ENCODE measurements at regions of chr2 and their contacts with region 1.

Region 1: DNA sequence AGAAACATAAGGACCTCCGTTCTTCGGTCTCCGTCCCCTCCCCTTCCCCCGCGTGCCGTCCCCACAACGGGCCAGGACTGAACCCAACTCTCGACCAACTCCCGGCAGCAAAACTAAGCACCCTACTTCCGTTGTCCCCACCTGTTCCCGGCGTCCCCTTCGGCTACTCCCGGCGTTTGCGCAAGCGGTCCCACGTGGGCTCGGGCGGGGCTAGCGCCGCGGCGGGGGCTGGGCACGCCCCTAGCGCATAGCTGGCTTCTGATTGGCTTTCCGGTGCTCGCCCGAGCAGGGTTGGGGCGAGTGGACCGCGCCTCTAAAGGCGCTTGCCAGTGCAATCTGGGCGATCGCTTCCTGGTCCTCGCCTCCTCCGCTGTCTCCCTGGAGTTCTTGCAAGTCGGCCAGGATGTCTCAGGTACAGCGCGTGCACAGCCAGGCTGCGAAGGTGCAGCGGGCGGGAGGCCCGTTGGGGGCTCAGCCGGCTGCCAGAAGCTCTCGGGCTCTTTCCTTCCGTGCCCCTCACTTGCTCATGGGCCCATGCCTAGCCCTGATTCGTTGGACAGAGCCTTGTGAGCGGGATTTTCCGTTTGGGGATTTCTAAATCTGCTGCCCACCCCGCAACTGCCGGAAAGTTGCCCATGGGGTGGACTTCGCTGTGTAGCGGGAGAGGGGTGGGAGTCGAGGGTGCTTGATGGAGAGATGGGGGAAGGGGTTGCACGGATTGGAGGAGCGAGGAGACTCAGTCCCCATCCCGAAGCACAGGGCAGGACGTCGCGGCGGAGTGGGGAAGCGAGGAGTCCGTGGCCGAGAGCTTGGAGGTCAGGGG is at the starts of genes C2orf76 and DBI:
- DNase-seq: peak; percentile 82 to 94 (median 89)
- ATAC-seq: peak; percentile 97
- H3K4me3 ChIP-seq: peak within 1 kb of the TSS; percentile 80
- H3K4me3 Mint-ChIP-seq: peak within 1 kb of the TSS; percentile 79 to 99 (median 94)
- H3K27ac ChIP-seq: peak within 1 kb of the TSS; percentile 86
- H3K27ac Mint-ChIP-seq: peak within 1 kb of the TSS; percentile 78 to 97 (median 92)
- H3K4me1 ChIP-seq: peaks cover 10 to 19% of the 10 kb centered on the region in 2 donors
- H3K4me1 Mint-ChIP-seq: peaks cover 37 to 64% (median 47%) of the 10 kb centered on the region in 7 donors
- H3K27me3 ChIP-seq: no peaks in the 10 kb centered on the region
- H3K27me3 Mint-ChIP-seq: no peaks in the 10 kb centered on the region
- total RNA-seq, gene C2orf76: 5.1 to 9.2 (median 8.5) TPM
- total RNA-seq, gene DBI: 29.3 to 111 (median 42.7) TPM

Region 2: DNA sequence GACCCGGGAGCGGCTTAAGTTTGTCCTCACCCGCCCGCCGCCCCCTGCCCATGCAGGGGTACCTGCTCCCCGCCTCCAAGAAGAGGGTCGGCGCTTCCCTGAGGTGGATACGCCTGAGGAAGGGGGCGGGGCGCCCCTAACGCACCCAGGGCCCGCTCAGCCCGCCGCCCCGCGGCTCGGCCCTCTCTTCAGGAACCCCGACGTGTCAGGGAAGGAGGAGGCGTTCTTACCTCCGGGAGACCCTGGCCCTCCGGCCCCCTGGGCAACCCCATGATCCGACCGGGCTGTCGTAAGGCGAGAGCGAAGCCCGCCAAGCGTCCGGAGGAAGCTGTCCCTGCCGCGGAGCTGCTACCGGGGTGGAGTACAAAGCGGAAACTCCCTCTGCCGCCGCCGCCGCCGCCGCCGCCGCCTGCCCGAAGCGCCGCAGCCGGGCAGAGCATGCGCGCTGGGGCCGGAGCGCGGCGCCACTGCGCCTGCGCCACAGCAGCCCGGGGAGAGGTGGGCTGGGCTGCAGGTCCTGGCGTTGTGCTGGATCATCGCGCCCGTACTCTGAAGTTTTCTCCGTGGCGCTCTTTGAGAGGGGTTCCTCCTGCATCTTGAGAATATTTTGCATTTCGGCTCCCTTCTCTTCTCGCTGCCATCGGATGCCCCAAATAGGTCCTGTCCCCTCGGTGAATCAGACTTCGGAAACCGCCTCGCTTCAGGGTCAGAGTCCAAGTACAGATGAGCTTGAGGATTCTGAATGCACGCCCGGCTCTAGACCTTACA is 1353.0 kb before region 1 on chr2 and contains the start of gene CCDC93:
- CTCF ChIA-PET with region 1: no interaction called
- POLR2A ChIA-PET with region 1: no interaction called
- intact Hi-C with region 1: loop called (anchors 1 to 5 kb)
- DNase-seq: peak; percentile 82 to 95 (median 91)
- ATAC-seq: peak; percentile 88
- H3K4me3 ChIP-seq: peak within 1 kb of the TSS; percentile 90
- H3K4me3 Mint-ChIP-seq: peak within 1 kb of the TSS; percentile 87 to 98 (median 95)
- H3K27ac ChIP-seq: peak within 1 kb of the TSS; percentile 98
- H3K27ac Mint-ChIP-seq: peak within 1 kb of the TSS; percentile 59 to 96 (median 90)
- H3K4me1 ChIP-seq: peaks cover 6 to 9% of the 10 kb centered on the region in 2 donors
- H3K4me1 Mint-ChIP-seq: peaks cover 30 to 69% (median 41%) of the 10 kb centered on the region in 7 donors
- H3K27me3 ChIP-seq: no peaks in the 10 kb centered on the region
- H3K27me3 Mint-ChIP-seq: peaks cover 0 to 6% (median 1%) of the 10 kb centered on the region in 5 donors
- total RNA-seq, gene CCDC93: 34.8 to 73.9 (median 51.5) TPM

Region 3: GRCh38 chr2:118186110-118186857 is 1180.6 kb before region 1 on chr2:
- CTCF ChIA-PET with region 1: no interaction called
- POLR2A ChIA-PET with region 1: interaction called, 4 read pairs
- intact Hi-C with region 1: loop called (anchors 1 to 2 kb)
- DNase-seq: peak; percentile 77 to 91 (median 86)
- ATAC-seq: peak; percentile 97
- H3K4me3 ChIP-seq: peak overlapping the region; percentile 81
- H3K4me3 Mint-ChIP-seq: peak overlapping the region; percentile 89 to 98 (median 94)
- H3K27ac ChIP-seq: peak overlapping the region; percentile 74
- H3K27ac Mint-ChIP-seq: peak overlapping the region; percentile 88 to 98 (median 90)
- H3K4me1 ChIP-seq: peaks cover 6 to 9% of the 10 kb centered on the region in 2 donors
- H3K4me1 Mint-ChIP-seq: peaks cover 7 to 25% (median 21%) of the 10 kb centered on the region in 7 donors
- H3K27me3 ChIP-seq: no peaks in the 10 kb centered on the region
- H3K27me3 Mint-ChIP-seq: peaks cover 0 to 2% (median 0%) of the 10 kb centered on the region in 5 donors

Region 4: GRCh38 chr2:118309946-118310680 is 1056.7 kb before region 1 on chr2:
- CTCF ChIA-PET with region 1: no interaction called
- POLR2A ChIA-PET with region 1: no interaction called
- intact Hi-C with region 1: loop called in 1 of 2 experiments (anchors 1 kb)
- DNase-seq: peak; percentile 51 to 82 (median 75)
- ATAC-seq: peak; percentile 81
- H3K4me3 ChIP-seq: peak overlapping the region; percentile 89
- H3K4me3 Mint-ChIP-seq: peak overlapping the region; percentile 81 to 95 (median 90)
- H3K27ac ChIP-seq: peak overlapping the region; percentile 89
- H3K27ac Mint-ChIP-seq: peak overlapping the region; percentile 87 to 99 (median 96)
- H3K4me1 ChIP-seq: peaks cover 10 to 12% of the 10 kb centered on the region in 2 donors
- H3K4me1 Mint-ChIP-seq: peaks cover 0 to 21% (median 9%) of the 10 kb centered on the region in 7 donors
- H3K27me3 ChIP-seq: no peaks in the 10 kb centered on the region
- H3K27me3 Mint-ChIP-seq: peaks cover 0 to 21% (median 0%) of the 10 kb centered on the region in 5 donors

Region 5: GRCh38 chr2:118968042-118968441 is 398.8 kb before region 1 on chr2:
- CTCF ChIA-PET with region 1: no interaction called
- POLR2A ChIA-PET with region 1: no interaction called
- intact Hi-C with region 1: no loop called
- DNase-seq: no peak
- ATAC-seq: no peak
- H3K4me3 ChIP-seq: no peak overlapping the region
- H3K4me3 Mint-ChIP-seq: no peak overlapping the region
- H3K27ac ChIP-seq: no peak overlapping the region
- H3K27ac Mint-ChIP-seq: no peak overlapping the region
- H3K4me1 ChIP-seq: no peaks in the 10 kb centered on the region
- H3K4me1 Mint-ChIP-seq: peaks cover 0 to 8% (median 0%) of the 10 kb centered on the region in 7 donors
- H3K27me3 ChIP-seq: no peaks in the 10 kb centered on the region
- H3K27me3 Mint-ChIP-seq: peaks cover 0 to 13% (median 7%) of the 10 kb centered on the region in 5 donors

Region 6: DNA sequence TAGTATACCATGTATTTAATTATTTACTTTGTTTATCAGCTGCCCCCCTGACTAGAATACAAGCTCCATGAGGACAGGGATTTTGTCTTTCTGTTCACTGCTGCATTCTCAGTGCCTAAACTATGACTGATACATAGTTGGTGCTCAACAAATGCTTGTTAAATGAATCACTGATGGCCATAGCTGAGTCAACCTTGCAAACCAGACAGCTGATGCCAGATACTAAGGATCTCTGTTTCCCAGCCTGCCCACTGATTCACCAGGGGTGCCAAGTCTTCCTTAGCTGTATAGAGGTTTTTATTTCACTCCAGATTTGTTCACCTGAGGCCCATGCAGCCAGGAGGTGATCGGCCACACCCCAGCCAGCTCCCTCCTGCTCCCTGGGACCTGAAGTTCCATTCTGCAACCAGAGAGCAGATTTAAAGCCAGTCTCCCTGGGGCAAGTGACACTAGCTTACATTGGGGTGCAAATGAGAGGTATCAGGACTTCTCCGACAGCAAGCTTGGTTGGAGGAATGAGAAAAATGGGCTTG is 300.5 kb before region 1 on chr2:
- CTCF ChIA-PET with region 1: no interaction called
- POLR2A ChIA-PET with region 1: no interaction called
- intact Hi-C with region 1: no loop called
- DNase-seq: no peak
- ATAC-seq: no peak
- H3K4me3 ChIP-seq: no peak overlapping the region
- H3K4me3 Mint-ChIP-seq: no peak overlapping the region
- H3K27ac ChIP-seq: no peak overlapping the region
- H3K27ac Mint-ChIP-seq: no peak overlapping the region
- H3K4me1 ChIP-seq: no peaks in the 10 kb centered on the region
- H3K4me1 Mint-ChIP-seq: peaks cover 0 to 2% (median 0%) of the 10 kb centered on the region in 7 donors
- H3K27me3 ChIP-seq: no peaks in the 10 kb centered on the region
- H3K27me3 Mint-ChIP-seq: no peaks in the 10 kb centered on the region

Region 7: DNA sequence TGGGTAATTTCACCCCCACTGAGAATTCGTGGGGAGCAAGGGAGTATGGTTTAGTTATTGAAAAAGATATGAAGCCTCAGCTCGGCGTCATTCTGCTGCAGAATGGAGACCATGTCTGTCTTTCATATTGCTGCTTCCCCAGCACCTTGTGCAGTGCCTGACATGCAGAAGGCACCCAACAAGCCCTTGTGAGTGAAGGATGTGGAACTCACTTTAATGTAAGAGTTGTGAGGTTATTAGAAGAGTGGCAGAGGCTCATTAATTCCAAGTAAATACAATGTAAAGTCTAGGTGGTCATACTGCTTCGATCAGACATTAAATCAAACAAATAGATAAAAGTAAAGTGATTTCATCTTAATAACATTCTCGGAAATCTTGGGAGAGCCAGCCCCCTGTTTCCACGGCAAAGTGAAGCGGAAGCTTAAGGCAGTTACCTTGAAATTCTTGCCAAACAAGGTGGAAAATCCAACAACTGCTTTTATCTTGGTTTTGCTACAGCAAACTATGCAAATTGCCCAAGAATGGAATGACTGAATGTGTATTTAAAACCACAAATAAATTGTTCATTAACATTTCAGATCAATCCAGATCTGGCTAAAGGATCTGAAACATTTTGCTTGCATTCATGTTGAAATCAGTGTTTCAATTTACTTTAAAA is 187.0 kb after region 1 on chr2:
- CTCF ChIA-PET with region 1: no interaction called
- POLR2A ChIA-PET with region 1: no interaction called
- intact Hi-C with region 1: no loop called
- DNase-seq: no peak
- ATAC-seq: no peak
- H3K4me3 ChIP-seq: no peak overlapping the region
- H3K4me3 Mint-ChIP-seq: no peak overlapping the region
- H3K27ac ChIP-seq: no peak overlapping the region
- H3K27ac Mint-ChIP-seq: no peak overlapping the region
- H3K4me1 ChIP-seq: no peaks in the 10 kb centered on the region
- H3K4me1 Mint-ChIP-seq: no peaks in the 10 kb centered on the region
- H3K27me3 ChIP-seq: no peaks in the 10 kb centered on the region
- H3K27me3 Mint-ChIP-seq: peaks cover 3 to 43% (median 21%) of the 10 kb centered on the region in 5 donors

Region 8: DNA sequence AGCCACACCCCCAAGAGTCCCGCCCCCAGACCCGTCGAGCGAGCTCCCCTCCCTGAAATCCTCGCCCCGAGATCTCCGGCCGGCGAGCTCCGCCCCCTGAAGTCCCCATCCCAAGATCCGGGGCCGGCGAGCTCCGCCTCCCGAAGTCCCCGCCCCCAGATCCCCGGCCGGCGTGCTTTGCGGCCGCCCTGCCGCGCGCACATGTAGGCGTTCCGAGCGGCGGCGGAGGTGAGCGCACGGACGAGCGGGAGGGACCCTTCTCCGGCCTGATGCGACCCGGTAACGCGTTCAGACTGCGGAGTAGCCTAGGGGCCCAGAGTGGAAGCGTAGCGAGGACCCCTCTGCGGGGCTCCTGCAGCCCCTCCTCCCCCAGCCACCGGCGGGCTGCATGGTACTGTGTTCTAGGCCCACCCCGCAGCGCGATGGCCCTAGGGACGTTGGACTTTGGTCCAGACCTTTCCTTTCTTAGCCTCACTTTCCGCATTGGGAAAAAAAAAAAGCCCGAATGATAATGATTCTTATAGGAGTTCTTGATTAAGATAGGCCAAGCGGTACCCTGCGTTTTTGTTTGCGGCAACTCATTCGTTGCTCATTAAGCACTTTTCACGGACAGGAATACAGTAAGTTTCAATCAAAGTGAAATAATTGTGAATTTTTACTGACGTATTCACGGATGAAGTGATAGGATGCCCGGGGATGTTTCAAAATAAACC is 312.3 kb after region 1 on chr2 and contains the start of gene TMEM177:
- CTCF ChIA-PET with region 1: no interaction called
- POLR2A ChIA-PET with region 1: no interaction called
- intact Hi-C with region 1: loop called (anchors 1 to 2 kb)
- DNase-seq: peak; percentile 72 to 96 (median 87)
- ATAC-seq: peak; percentile 91
- H3K4me3 ChIP-seq: peak within 1 kb of the TSS; percentile 95
- H3K4me3 Mint-ChIP-seq: peak within 1 kb of the TSS; percentile 87 to 96 (median 90)
- H3K27ac ChIP-seq: peak within 1 kb of the TSS; percentile 88
- H3K27ac Mint-ChIP-seq: peak within 1 kb of the TSS; percentile 58 to 99 (median 97)
- H3K4me1 ChIP-seq: peaks cover 0 to 15% of the 10 kb centered on the region in 2 donors
- H3K4me1 Mint-ChIP-seq: peaks cover 25 to 48% (median 38%) of the 10 kb centered on the region in 7 donors
- H3K27me3 ChIP-seq: no peaks in the 10 kb centered on the region
- H3K27me3 Mint-ChIP-seq: peaks cover 0 to 21% (median 0%) of the 10 kb centered on the region in 5 donors
- total RNA-seq, gene TMEM177: 5.5 to 38.1 (median 11.6) TPM

Region 9: GRCh38 chr2:120223034-120223912 is 856.4 kb after region 1 on chr2 and contains the start of gene TMEM185B:
- CTCF ChIA-PET with region 1: no interaction called
- POLR2A ChIA-PET with region 1: no interaction called
- intact Hi-C with region 1: loop called (anchors 1 to 2 kb)
- DNase-seq: peak; percentile 83 to 96 (median 90)
- ATAC-seq: peak; percentile 97
- H3K4me3 ChIP-seq: peak within 1 kb of the TSS; percentile 74
- H3K4me3 Mint-ChIP-seq: peak within 1 kb of the TSS; percentile 83 to 91 (median 88)
- H3K27ac ChIP-seq: peak within 1 kb of the TSS; percentile 94
- H3K27ac Mint-ChIP-seq: peak within 1 kb of the TSS; percentile 85 to 92 (median 91)
- H3K4me1 ChIP-seq: peaks cover 20 to 23% of the 10 kb centered on the region in 2 donors
- H3K4me1 Mint-ChIP-seq: peaks cover 34 to 67% (median 56%) of the 10 kb centered on the region in 7 donors
- H3K27me3 ChIP-seq: no peaks in the 10 kb centered on the region
- H3K27me3 Mint-ChIP-seq: no peaks in the 10 kb centered on the region
- total RNA-seq, gene TMEM185B: 14.9 to 36.8 (median 19.5) TPM